ENCODE measurements at regions of chr4 and their contacts with region 1.

Region 1: DNA sequence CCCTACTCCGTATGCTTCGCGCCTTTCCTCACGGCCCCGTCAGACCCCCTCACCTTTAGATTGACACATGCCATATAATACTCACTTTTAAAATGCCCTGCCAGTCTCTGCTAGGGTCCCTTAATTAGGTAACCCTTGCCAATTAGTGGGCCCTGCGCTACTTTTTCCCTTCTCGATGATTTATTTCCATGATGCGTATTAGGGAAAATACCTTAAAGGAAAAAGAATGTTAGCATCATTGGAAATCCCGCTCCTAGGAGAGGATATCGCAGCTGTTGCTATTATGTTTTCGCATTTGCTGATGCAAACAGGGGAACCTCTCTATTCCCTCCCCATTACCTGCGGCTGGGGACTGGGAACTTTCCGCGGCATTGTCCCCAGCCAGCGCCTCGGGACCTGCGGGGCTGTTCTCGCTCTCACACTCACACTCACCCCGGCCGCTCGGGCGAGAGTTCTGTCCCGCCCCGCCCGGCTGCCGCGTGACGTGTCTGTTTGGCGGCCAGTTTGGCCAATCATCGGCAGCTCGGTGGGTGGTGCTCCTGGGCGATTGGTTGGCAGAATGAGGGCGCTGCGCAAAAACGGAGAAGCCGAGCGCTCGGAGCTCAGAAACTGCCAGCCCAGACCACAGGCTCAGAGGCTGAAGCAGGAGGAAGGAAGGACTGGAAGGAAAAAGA is at the start of gene PCDH10:
- DNase-seq: peak; percentile 87
- ATAC-seq: peak; percentile 87
- H3K4me3 ChIP-seq: peak within 1 kb of the TSS; percentile 50
- H3K27ac ChIP-seq: no peak within 1 kb of the TSS
- H3K4me1 ChIP-seq: peaks cover 2% of the 10 kb centered on the region; the same call in 1 of the 2 replicates
- H3K27me3 ChIP-seq: peaks cover 46% of the 10 kb centered on the region
- CTCF ChIP-seq: no peak
- POLR2A ChIP-seq: peak; percentile 94
- RAD21 ChIP-seq: no peak
- total RNA-seq, gene PCDH10: 0.90 and 1.4 TPM in 2 replicates

Region 2: DNA sequence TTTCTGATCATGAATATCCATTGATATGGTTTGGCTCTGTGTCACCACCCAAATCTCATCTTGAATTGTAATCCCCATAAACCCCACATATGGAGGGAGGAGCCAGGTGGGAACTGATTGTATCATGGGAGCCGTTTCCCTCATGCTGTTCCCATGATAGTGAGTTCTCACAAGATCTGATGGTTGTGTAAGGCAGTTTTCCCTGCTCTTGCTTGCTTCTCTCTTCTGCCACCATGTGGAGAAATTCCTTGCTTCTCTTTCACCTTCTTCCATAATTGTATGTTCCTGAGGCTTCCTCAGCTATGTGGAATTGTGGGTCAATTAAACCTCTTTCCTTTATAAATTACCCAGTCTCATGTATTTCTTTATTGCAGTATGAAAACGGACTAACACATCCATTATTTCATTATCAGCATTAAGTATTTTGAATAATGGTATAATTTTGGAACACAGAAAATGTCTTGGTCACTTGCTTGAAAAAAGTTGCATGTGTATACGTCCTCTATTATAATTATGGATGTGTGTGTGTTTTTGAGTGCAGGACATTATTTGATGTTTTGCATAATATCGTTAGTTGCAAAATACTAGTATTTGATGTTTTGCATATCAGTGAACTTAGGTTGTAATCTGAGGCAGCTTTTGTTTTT is 334.9 kb after region 1 on chr4:
- CTCF ChIA-PET with region 1: no interaction called
- POLR2A ChIA-PET with region 1: no interaction called
- dilution Hi-C with region 1: no loop called
- in situ Hi-C with region 1: no loop called
- intact Hi-C with region 1: loop called (anchors 2 kb)
- DNase-seq: peak; percentile 33
- ATAC-seq: peak; percentile 54; the same call in 1 of the 2 replicates
- H3K4me3 ChIP-seq: no peak overlapping the region
- H3K27ac ChIP-seq: no peak overlapping the region
- H3K4me1 ChIP-seq: no peaks in the 10 kb centered on the region
- H3K27me3 ChIP-seq: no peaks in the 10 kb centered on the region
- CTCF ChIP-seq: peak; percentile 31; the same call in 1 of the 2 replicates
- POLR2A ChIP-seq: no peak
- RAD21 ChIP-seq: peak; percentile 28; the same call in 1 of the 2 replicates

Region 3: GRCh38 chr4:134070174-134070797 is 921.5 kb after region 1 on chr4:
- CTCF ChIA-PET with region 1: no interaction called
- POLR2A ChIA-PET with region 1: no interaction called
- dilution Hi-C with region 1: no loop called
- in situ Hi-C with region 1: no loop called
- intact Hi-C with region 1: loop called (anchors 5 kb)
- DNase-seq: no peak
- ATAC-seq: no peak
- H3K4me3 ChIP-seq: no peak overlapping the region
- H3K27ac ChIP-seq: no peak overlapping the region
- H3K4me1 ChIP-seq: no peaks in the 10 kb centered on the region
- H3K27me3 ChIP-seq: no peaks in the 10 kb centered on the region
- CTCF ChIP-seq: no peak
- POLR2A ChIP-seq: no peak
- RAD21 ChIP-seq: no peak

Region 4: DNA sequence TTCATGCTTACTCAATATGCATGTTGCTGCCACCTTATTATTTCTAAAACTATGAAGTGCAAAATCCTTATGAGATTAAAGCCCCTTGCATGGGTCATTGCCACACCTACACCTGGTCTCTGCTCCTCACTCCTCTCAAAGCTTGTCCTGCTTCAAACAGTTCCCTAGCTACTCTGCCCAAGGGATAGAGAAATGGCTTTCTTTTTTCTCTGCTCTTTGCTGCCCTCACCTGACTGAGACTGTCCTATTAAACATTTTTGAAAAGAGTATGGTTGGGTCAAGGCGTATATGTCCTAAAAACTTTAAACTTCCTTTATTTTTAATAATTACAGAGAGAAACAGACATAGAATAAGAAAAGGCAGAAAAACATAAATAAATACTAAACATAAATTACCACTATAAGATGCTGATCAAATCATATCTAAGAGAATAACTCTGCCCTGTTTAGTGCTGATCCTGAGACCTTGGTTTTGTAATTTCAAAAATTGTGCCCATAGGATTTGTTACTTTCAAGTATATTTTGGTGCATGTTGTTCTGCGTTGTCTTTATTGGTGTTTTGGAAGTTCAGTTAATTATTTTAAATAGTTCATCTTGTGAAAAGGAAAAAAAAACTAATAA is 1757.7 kb after region 1 on chr4:
- CTCF ChIA-PET with region 1: no interaction called
- POLR2A ChIA-PET with region 1: no interaction called
- dilution Hi-C with region 1: no loop called
- in situ Hi-C with region 1: no loop called
- intact Hi-C with region 1: loop called (anchors 10 kb)
- DNase-seq: no peak
- ATAC-seq: 0 out of 2 replicates have a peak, but pooled peaks have one; percentile 49
- H3K4me3 ChIP-seq: no peak overlapping the region
- H3K27ac ChIP-seq: no peak overlapping the region
- H3K4me1 ChIP-seq: no peaks in the 10 kb centered on the region
- H3K27me3 ChIP-seq: no peaks in the 10 kb centered on the region
- CTCF ChIP-seq: no peak; the same call in 1 of the 2 replicates
- POLR2A ChIP-seq: no peak
- RAD21 ChIP-seq: no peak

Measured in IMR-90 (cell line).